Adrenal gland (tissue), 19 donors: ENCODE measurements at regions of chr5 and their contacts with region 1.

Region 1: GRCh38 chr5:40882291-40882690 is 27.0 kb upstream of the C7 start:
- DNase-seq: no peak
- H3K4me3 ChIP-seq: no peak overlapping the region
- H3K27ac ChIP-seq: no peak overlapping the region
- H3K4me1 ChIP-seq: peaks cover 0 to 5% of the 10 kb centered on the region in 2 donors
- H3K27me3 ChIP-seq: no peaks in the 10 kb centered on the region
- CTCF ChIP-seq: no peak
- POLR2A ChIP-seq: no peak

Region 2: GRCh38 chr5:40755407-40756365 is 126.6 kb before region 1 on chr5 and contains the start of gene TTC33:
- intact Hi-C with region 1: loop called in 1 of 2 experiments (anchors 10 kb)
- DNase-seq: peak; percentile 95 to 98 (median 97)
- H3K4me3 ChIP-seq: peak within 1 kb of the TSS; percentile 72 to 98 (median 87)
- H3K27ac ChIP-seq: peak within 1 kb of the TSS; percentile 59 to 95 (median 89)
- H3K4me1 ChIP-seq: peaks cover 13 to 17% of the 10 kb centered on the region in 2 donors
- H3K27me3 ChIP-seq: no peaks in the 10 kb centered on the region
- CTCF ChIP-seq: peak; percentile 44 to 69 (median 56)
- POLR2A ChIP-seq: peak in 1 of 2 donors; percentile 81
- total RNA-seq, gene TTC33: 5.9 to 33.5 (median 15.3) TPM

Region 3: GRCh38 chr5:40945111-40945510 is 62.8 kb after region 1 on chr5:
- intact Hi-C with region 1: no loop called
- DNase-seq: no peak
- H3K4me3 ChIP-seq: no peak overlapping the region
- H3K27ac ChIP-seq: no peak overlapping the region
- H3K4me1 ChIP-seq: no peaks in the 10 kb centered on the region
- H3K27me3 ChIP-seq: no peaks in the 10 kb centered on the region
- CTCF ChIP-seq: no peak
- POLR2A ChIP-seq: no peak